Cardiac septum (tissue), 1 donor: ENCODE measurements at regions of chr12 and their contacts with region 1.

Region 1: GRCh38 chr12:108856428-108857157 is 790 bp downstream of the SSH1 start:
- DNase-seq: peak; percentile 93

Region 2: GRCh38 chr12:107978201-107978600 is 878.4 kb before region 1 on chr12:
- intact Hi-C with region 1: no loop called
- DNase-seq: no peak

Region 3: DNA sequence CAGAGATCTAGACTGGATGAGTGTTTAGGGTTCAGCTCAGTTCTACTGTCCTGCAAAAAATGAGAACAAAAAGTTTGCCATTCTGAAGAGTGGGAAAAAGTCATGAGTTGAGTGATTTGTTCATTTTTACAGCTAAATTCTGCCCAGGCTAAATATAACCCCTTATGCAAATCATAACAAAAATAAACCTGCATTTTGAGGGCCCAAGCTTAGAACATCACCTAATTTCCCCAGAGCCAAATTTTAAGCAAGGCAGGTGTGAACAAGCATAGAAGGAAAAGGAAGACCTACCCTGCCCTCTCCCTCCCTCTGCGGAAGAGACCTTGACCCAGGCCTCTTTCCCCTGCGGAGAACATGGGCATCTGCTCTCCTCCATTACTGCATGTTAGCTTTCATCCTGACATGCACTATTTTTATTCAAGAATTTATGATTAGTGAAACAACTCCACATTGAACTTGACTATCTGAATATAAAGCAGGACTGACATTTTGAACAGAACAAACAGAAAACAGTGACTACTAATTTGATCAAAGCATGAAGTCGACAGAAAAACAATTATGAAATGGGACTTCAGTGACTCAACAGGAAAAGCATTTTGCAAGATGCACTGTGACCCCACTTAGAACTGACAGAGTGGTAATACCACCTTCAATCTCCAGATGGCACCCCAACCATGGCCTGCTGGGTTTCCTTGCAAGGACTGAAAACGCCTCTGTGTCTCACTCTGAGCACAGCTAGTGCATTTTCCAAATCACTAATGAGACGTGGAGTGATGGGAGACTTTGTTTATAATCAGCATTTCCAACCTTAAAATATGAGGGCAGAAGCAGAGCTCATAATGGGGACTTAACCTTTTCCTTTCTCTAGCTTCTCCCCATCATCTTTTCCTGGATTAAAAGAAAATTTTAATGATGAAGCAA is 192.0 kb before region 1 on chr12:
- intact Hi-C with region 1: loop called (anchors 2 kb)
- DNase-seq: peak; percentile 92

Region 4: DNA sequence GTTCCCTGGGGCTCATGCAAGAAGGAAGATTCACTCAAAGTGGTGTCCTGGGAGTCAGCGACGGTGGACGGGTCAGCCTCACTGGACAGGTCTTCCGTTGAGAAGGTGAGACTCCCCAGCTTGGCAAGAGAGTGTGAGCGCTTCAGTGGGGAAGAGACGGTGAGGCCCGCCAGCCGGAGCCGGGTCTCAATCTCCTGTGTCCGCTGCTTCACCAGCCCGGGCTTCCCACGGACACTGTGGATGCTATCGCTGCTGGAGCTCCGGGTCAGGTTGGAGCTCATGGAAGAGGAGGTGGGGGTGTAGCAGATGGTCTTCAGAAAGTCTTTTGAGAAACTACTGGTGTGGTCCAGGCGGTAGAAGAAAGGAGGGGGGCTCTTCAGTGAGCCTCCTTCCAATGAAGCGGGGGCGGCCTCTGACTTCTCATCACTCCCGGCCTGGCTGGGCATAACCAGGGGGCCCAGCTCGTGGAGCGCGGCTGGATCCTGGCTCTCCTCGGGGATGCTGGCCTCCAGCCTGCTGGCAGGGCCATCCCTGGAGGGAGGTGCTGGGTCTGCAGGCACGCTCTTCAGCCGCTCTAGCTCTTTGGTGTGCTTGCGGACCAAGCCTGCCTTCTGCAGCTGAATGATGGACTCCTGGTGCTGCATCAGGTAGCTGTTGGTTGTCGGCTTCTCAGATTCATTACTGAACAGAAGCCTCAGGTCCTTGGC is 68.4 kb before region 1 on chr12:
- intact Hi-C with region 1: no loop called
- DNase-seq: no peak

Region 5: GRCh38 chr12:108803428-108804105 is 53.0 kb before region 1 on chr12:
- intact Hi-C with region 1: loop called (anchors 2 kb)
- DNase-seq: no peak

Region 6: DNA sequence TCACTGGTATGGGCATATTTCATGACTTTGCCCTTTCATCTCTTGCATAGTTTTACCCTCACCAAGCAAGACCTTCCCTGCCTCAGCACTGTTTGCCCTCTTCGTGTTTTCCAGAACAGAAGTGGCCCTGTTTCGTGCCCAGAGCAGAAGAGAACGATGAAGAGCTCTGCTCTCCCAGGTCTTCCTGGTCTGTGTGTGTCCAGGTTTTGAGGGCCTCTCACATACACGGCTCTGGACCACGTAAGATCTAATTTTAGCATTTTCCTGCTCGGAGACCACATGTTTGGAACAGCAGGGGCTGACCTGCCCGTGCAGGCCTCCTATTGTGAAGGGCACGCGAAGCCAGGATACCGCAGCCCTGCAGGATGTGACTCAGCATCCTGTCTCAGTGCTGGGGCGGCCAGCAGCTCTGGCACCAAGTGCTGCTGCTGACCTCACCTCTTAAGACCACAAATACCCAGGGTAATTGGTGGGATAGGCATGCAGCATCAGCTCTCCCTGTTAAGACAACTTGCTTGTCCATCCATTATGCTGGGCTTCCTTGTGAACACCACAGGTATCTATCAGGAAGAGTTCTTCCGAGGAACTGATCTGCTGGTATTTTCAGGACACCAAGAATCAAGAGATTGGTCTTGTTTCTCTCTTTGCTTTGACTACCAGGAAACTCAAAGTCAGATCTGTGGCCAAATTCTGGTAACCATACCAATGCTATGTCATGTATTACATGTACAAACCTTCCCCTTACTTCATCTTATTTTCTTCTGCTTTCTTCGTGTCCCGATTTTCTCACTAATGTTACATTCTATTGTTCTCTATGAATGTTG is 18.2 kb before region 1 on chr12:
- intact Hi-C with region 1: loop called (anchors 2 kb)
- DNase-seq: peak; percentile 96

Region 7: GRCh38 chr12:109093022-109093918 is 236.7 kb after region 1 on chr12 and contains the start of gene ALKBH2:
- intact Hi-C with region 1: loop called (anchors 5 kb)
- DNase-seq: peak; percentile 97
- total RNA-seq, gene ALKBH2: 9.7 TPM